ENCODE measurements at regions of chr6 and their contacts with region 1.

Region 1: GRCh38 chr6:94323853-94324252 is 904.5 kb upstream of the EPHA7 start:
- DNase-seq: peak in 16 of 42 donors; percentile 1 to 42 (median 20)

Region 2: GRCh38 chr6:94414041-94414440 is 90.2 kb after region 1 on chr6:
- intact Hi-C with region 1: loop called (anchors 5 kb)
- DNase-seq: no peak

Measured in head of caudate nucleus (tissue), 42 donors.